Ovary (tissue), 10 donors: ENCODE measurements at regions of chr11 and their contacts with region 1.

Region 1: DNA sequence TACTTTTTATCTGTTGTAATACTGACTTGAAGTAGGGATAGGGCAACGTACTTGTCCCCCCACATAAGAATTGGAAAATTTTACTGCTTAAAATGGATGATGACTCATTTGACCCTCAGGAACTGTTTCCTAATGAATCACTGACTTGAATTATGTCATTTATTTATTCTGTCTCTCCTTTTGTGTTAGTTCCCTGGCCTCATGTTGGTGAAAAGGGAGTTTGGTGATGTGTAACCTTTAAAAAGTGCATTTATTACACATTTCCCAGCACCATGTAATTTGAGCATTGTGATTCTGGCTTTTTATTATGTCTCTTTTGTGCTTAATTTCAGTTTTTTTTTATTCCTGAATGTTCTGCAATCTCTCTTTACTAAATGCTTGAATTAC is 20.3 kb upstream of the PGM2L1 start:
- DNase-seq: no peak
- H3K4me3 ChIP-seq: no peak overlapping the region
- H3K27ac ChIP-seq: peak overlapping the region in 1 of 2 donors; percentile 39
- H3K4me1 ChIP-seq: peaks cover 3% of the 10 kb centered on the region
- H3K27me3 ChIP-seq: no peaks in the 10 kb centered on the region
- CTCF ChIP-seq: no peak
- EP300 ChIP-seq: no peak
- POLR2A ChIP-seq: no peak

Region 2: GRCh38 chr11:72693271-72693968 is 1725.1 kb before region 1 on chr11:
- intact Hi-C with region 1: loop called in 1 of 4 experiments (anchors 5 kb)
- DNase-seq: no peak
- H3K4me3 ChIP-seq: no peak overlapping the region
- H3K27ac ChIP-seq: no peak overlapping the region
- H3K4me1 ChIP-seq: no peaks in the 10 kb centered on the region
- H3K27me3 ChIP-seq: no peaks in the 10 kb centered on the region
- CTCF ChIP-seq: no peak
- EP300 ChIP-seq: no peak
- POLR2A ChIP-seq: no peak